HCT116 (cell line): ENCODE measurements at regions of chr16 and their contacts with region 1.

Region 1: GRCh38 chr16:58755989-58756649 is 22.0 kb upstream of the GOT2 start:
- DNase-seq: peak; percentile 66
- ATAC-seq: peak; percentile 98
- H3K4me3 ChIP-seq: no peak overlapping the region
- H3K27ac ChIP-seq: no peak overlapping the region
- H3K4me1 ChIP-seq: no peaks in the 10 kb centered on the region; a peak in 1 of 4 replicates
- H3K27me3 ChIP-seq: no peaks in the 10 kb centered on the region
- CTCF ChIP-seq: peak; percentile 60 to 77 (median 76); a peak in 5 of 6 replicates
- POLR2A ChIP-seq: no peak
- RAD21 ChIP-seq: peak; percentile 84

Region 2: DNA sequence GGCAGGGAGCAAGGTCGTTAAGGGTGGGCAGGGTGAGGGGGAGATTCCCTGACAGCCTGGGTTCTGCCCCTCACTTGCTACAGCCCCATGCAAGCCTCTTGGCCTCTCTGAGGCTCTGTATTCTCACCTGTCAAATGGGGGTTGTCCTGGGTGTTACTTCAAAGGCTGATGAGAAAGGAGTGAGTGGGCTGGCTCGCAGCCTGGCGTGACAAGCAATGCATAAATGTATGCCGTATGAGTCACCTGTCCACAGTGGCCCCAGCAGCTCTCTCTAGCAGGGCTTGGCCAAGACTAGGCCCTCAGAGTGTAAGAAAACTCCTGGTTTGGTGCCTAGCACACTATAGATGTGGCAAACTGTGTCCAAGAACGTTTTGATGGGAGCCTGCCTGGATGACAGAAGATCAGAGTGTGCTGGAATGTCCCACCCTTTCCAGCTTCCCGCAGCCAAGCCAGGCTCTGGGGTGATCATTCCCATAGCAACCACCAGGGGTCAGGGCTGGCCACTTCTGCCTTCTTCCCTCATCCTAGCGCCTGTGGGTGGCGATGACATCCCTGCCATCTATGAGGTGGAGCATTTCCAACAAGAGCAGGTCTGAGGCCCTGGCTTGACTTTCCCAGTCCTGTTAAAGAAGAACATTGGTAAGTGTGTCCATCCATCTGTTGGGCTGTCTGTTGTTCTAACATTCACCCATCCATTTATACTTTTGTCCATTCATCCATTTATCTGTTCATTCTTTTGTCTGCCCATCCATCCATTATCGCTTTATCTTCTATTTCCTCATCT is 1164.8 kb before region 1 on chr16:
- CTCF ChIA-PET with region 1: no interaction called
- POLR2A ChIA-PET with region 1: no interaction called
- RAD21 ChIA-PET with region 1: no interaction called
- intact Hi-C with region 1: loop called (anchors 5 kb)
- DNase-seq: peak; percentile 76
- ATAC-seq: peak; percentile 92
- H3K4me3 ChIP-seq: peak overlapping the region; percentile 30 to 54
- H3K27ac ChIP-seq: peak overlapping the region; percentile 42
- H3K4me1 ChIP-seq: peaks cover 11 to 21% of the 10 kb centered on the region in 2 experiments
- H3K27me3 ChIP-seq: no peaks in the 10 kb centered on the region
- CTCF ChIP-seq: peak; percentile 91 to 99 (median 93)
- POLR2A ChIP-seq: no peak
- RAD21 ChIP-seq: peak; percentile 93

Region 3: DNA sequence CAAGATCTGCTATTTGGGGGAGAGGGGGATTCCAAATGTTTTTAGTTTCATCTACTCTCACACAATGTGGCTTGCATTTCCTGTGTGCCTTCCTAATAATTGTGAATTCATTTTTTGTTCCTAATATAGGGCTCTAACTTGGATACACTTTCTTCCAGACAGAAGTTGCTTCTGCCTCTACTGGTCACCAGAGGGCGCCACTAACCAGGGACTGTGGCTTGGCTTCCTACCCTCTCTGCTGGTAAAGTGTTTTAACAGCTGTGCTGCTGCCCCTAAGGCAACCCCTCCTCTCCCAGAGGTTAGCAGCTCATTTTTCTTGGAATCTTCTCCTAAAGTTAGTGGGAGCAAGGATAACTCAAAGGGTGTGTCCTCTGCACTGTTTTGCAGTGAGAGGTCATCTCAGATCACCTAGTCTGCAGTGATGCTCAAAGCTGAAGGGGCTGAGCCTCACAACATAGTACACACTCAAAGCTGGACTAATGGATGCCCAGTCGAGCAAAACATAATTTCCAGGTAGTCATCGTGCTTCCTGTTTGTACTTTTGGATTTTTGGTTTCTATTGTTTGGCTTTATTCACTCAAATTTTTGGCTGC is 456.3 kb before region 1 on chr16:
- CTCF ChIA-PET with region 1: interaction called, 13 read pairs
- POLR2A ChIA-PET with region 1: no interaction called
- RAD21 ChIA-PET with region 1: no interaction called
- intact Hi-C with region 1: no loop called
- DNase-seq: peak; percentile 13
- ATAC-seq: peak; percentile 89
- H3K4me3 ChIP-seq: no peak overlapping the region
- H3K27ac ChIP-seq: no peak overlapping the region
- H3K4me1 ChIP-seq: no peaks in the 10 kb centered on the region
- H3K27me3 ChIP-seq: no peaks in the 10 kb centered on the region
- CTCF ChIP-seq: peak; percentile 71 to 96 (median 87); a peak in 5 of 6 replicates
- POLR2A ChIP-seq: no peak
- RAD21 ChIP-seq: peak; percentile 75

Region 4: GRCh38 chr16:58336332-58337089 is 419.6 kb before region 1 on chr16:
- CTCF ChIA-PET with region 1: interaction called, 10 read pairs
- POLR2A ChIA-PET with region 1: no interaction called
- RAD21 ChIA-PET with region 1: no interaction called
- intact Hi-C with region 1: loop called (anchors 2 kb)
- DNase-seq: peak; percentile 77
- ATAC-seq: peak; percentile 81
- H3K4me3 ChIP-seq: 0 out of 4 replicates have a peak overlapping the region, but pooled peaks of 1 of the 2 experiments have one; percentile 2
- H3K27ac ChIP-seq: no peak overlapping the region
- H3K4me1 ChIP-seq: peaks cover 6 to 10% of the 10 kb centered on the region in 2 experiments
- H3K27me3 ChIP-seq: no peaks in the 10 kb centered on the region
- CTCF ChIP-seq: peak; percentile 91 to 98 (median 95)
- POLR2A ChIP-seq: no peak
- RAD21 ChIP-seq: peak; percentile 89

Region 5: DNA sequence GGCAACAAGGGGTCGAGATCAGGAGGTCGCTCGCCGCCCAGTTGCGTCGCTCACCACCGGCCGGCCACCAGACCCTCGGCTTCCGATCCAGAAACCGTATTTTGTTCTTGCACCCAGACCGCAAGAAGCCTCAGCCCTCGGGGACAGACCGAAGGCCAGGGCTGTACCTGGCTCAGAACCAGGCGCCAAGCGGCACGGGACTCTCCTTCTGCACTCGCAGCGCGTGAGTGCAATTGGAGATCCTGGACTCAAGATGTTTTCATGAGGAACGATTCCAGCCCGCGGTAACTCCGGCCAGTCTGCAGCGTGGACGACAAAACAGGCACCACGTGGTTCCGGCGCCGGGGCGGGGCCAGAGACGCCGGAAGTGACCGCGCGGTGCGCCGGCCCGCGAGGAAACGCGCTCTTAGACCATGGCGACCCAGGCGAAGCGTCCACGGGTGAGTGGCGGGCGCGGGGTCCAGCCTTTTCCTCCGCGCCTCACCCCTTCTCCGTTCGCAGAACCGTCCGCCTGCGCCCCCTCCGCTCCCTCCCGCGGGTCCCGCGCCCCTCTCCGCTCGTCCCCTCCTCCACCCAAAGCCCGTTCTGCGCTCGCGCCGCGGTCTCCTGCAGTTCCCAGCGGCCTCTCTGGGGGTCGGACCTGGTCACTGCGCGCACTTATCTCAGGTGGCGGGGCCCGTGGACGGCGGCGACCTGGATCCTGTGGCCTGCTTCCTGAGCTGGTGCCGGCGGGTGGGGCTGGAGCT is 240.8 kb before region 1 on chr16 and contains the start of gene SETD6:
- CTCF ChIA-PET with region 1: interaction called, 7 read pairs
- POLR2A ChIA-PET with region 1: no interaction called
- RAD21 ChIA-PET with region 1: no interaction called
- intact Hi-C with region 1: loop called (anchors 5 kb)
- DNase-seq: peak; percentile 70
- ATAC-seq: peak; percentile 80
- H3K4me3 ChIP-seq: peak within 1 kb of the TSS; percentile 72 to 85
- H3K27ac ChIP-seq: peak within 1 kb of the TSS; percentile 88
- H3K4me1 ChIP-seq: peaks cover 5 to 22% of the 10 kb centered on the region in 2 experiments; a peak in 3 of 4 replicates
- H3K27me3 ChIP-seq: no peaks in the 10 kb centered on the region
- CTCF ChIP-seq: no peak; a peak in 1 of 6 replicates
- POLR2A ChIP-seq: peak; percentile 60
- RAD21 ChIP-seq: no peak
- total RNA-seq, gene SETD6: 26.6 TPM

Region 6: GRCh38 chr16:58678716-58679115 is 77.4 kb before region 1 on chr16:
- CTCF ChIA-PET with region 1: interaction called, 15 read pairs
- POLR2A ChIA-PET with region 1: no interaction called
- RAD21 ChIA-PET with region 1: interaction called, 4 to 8 read pairs
- intact Hi-C with region 1: loop called (anchors 1 kb)
- DNase-seq: no peak
- ATAC-seq: peak; percentile 73
- H3K4me3 ChIP-seq: no peak overlapping the region
- H3K27ac ChIP-seq: no peak overlapping the region
- H3K4me1 ChIP-seq: peaks cover 0 to 3% of the 10 kb centered on the region in 2 experiments; a peak in 2 of 4 replicates
- H3K27me3 ChIP-seq: no peaks in the 10 kb centered on the region
- CTCF ChIP-seq: peak in 2 of 3 experiments; percentile 23; a peak in 3 of 6 replicates
- POLR2A ChIP-seq: no peak
- RAD21 ChIP-seq: peak; percentile 44; the same call in 1 of the 2 replicates

Region 7: DNA sequence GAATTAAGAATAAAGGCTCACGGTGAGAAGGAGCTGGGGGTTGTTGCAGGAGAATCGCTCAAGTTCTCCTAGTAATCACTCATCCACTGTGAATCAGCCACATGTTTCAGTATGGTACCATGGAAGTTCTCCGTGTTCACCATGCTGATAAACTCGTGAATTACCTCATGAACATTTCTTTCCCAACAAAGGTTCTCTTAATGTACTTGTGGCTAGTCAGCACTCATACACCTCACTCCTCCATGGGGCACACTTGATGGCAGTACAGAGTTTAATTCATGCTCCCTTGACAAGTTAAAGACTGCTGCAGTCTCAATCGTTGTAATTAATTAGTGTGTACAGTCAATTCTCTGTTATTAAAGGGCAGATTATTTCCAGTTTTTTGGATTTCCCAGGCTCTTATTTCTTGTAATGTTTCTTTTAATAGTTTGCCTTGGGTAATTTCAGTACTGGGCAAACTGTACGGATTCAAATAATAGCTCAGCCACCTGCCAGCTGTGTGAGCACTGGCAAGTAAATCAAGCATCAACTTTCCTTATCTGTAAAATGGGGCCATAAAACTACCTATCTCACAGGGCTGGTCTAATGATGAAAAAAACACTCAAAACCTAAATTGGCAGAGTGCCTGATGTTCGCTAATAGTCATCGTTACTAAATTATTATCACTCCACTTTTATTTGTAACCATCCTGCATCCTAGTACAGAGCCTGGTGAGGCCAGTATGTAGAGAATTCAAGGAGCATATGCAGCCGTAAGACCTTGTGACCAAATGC is 28.1 kb before region 1 on chr16:
- CTCF ChIA-PET with region 1: no interaction called
- POLR2A ChIA-PET with region 1: no interaction called
- RAD21 ChIA-PET with region 1: no interaction called
- intact Hi-C with region 1: no loop called
- DNase-seq: no peak
- ATAC-seq: no peak
- H3K4me3 ChIP-seq: no peak overlapping the region
- H3K27ac ChIP-seq: no peak overlapping the region
- H3K4me1 ChIP-seq: peaks cover 10 to 11% of the 10 kb centered on the region in 2 experiments
- H3K27me3 ChIP-seq: no peaks in the 10 kb centered on the region
- CTCF ChIP-seq: no peak
- POLR2A ChIP-seq: no peak
- RAD21 ChIP-seq: no peak